B cell (primary cell): ENCODE measurements at regions of chr1 and their contacts with region 1.

Region 1: GRCh38 chr1:160085686-160086455 is 4.5 kb downstream of the KCNJ9 start:
- DNase-seq: peak; percentile 79
- ATAC-seq: peak; percentile 58
- H3K4me3 ChIP-seq: no peak overlapping the region
- H3K4me3 Mint-ChIP-seq: peak overlapping the region; percentile 26
- H3K27ac ChIP-seq: no peak overlapping the region
- H3K27ac Mint-ChIP-seq: peak overlapping the region; percentile 21
- H3K4me1 ChIP-seq: peaks cover 6 to 9% of the 10 kb centered on the region in 2 donors
- H3K4me1 Mint-ChIP-seq: peaks cover 12% of the 10 kb centered on the region
- H3K27me3 ChIP-seq: peaks cover 0 to 25% (median 18%) of the 10 kb centered on the region in 4 experiments
- H3K27me3 Mint-ChIP-seq: peaks cover 20% of the 10 kb centered on the region
- CTCF ChIP-seq: peak; percentile 85

Region 2: GRCh38 chr1:160070243-160071163 is 15.4 kb before region 1 on chr1:
- CTCF ChIA-PET with region 1: interaction called, 27 read pairs
- POLR2A ChIA-PET with region 1: no interaction called
- intact Hi-C with region 1: no loop called
- DNase-seq: peak; percentile 81
- ATAC-seq: peak; percentile 98
- H3K4me3 ChIP-seq: peak overlapping the region in 4 of 5 experiments; percentile 48 to 63 (median 60)
- H3K4me3 Mint-ChIP-seq: peak overlapping the region; percentile 90
- H3K27ac ChIP-seq: no peak overlapping the region
- H3K27ac Mint-ChIP-seq: no peak overlapping the region
- H3K4me1 ChIP-seq: peaks cover 11 to 12% of the 10 kb centered on the region in 2 donors
- H3K4me1 Mint-ChIP-seq: peaks cover 12% of the 10 kb centered on the region
- H3K27me3 ChIP-seq: peaks cover 0 to 32% (median 19%) of the 10 kb centered on the region in 4 experiments
- H3K27me3 Mint-ChIP-seq: peaks cover 56% of the 10 kb centered on the region
- CTCF ChIP-seq: no peak

Region 3: DNA sequence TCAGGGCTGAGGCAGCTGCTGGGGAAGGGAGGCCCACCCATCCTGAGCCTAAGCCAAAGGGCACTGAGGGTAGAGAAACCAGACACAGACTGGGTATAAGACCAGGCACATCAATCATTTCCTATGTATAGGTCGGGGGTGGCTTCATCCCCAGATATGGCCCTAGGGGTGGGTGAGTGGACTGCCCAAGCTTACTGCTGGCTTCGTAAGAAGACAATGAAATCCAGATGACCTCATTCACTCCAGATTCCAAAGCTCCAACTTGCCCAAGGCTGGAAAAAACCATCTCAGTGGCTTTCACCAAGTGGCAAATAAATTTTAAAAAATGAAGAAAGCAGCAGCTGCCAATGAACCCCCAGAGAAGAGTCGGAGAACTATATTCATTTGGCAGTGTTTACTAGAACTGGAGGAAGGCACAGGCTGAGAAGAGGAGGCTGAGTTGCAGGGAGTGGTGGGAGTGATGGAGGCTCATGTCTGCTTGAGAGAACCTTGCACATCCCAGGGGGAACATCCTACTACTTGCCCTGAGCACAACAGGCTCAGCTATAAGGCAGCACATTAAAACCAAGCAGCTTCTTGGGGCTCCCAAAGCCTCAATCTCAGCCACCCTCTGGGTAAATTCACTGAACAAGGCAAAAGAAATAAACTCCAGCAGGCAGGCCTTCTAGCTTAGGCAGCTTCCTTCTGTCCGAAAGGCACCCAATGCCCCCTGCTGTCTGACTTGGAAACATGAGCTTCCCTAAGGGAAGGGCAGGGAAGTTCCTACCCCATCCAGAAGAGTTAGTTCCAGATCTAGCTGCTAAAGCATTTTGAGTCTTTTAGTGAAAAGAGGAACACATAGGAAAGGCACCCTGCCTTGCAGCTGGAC is 133.4 kb after region 1 on chr1:
- CTCF ChIA-PET with region 1: interaction called, 18 read pairs
- POLR2A ChIA-PET with region 1: no interaction called
- intact Hi-C with region 1: no loop called
- DNase-seq: peak; percentile 34
- ATAC-seq: no peak
- H3K4me3 ChIP-seq: no peak overlapping the region
- H3K4me3 Mint-ChIP-seq: no peak overlapping the region
- H3K27ac ChIP-seq: peak overlapping the region in 1 of 2 donors; percentile 13
- H3K27ac Mint-ChIP-seq: peak overlapping the region; percentile 57
- H3K4me1 ChIP-seq: no peaks in the 10 kb centered on the region
- H3K4me1 Mint-ChIP-seq: no peaks in the 10 kb centered on the region
- H3K27me3 ChIP-seq: no peaks in the 10 kb centered on the region
- H3K27me3 Mint-ChIP-seq: no peaks in the 10 kb centered on the region
- CTCF ChIP-seq: no peak